Activated CD8-positive, alpha-beta memory T cell treated with anti-CD3 and anti-CD28 coated beads, Interleukin-2, amount 10 ng/mL, durations not matched to agents 7 days and 5 days (primary cell): ENCODE measurements at regions of chr14 and their contacts with region 1.

Region 1: DNA sequence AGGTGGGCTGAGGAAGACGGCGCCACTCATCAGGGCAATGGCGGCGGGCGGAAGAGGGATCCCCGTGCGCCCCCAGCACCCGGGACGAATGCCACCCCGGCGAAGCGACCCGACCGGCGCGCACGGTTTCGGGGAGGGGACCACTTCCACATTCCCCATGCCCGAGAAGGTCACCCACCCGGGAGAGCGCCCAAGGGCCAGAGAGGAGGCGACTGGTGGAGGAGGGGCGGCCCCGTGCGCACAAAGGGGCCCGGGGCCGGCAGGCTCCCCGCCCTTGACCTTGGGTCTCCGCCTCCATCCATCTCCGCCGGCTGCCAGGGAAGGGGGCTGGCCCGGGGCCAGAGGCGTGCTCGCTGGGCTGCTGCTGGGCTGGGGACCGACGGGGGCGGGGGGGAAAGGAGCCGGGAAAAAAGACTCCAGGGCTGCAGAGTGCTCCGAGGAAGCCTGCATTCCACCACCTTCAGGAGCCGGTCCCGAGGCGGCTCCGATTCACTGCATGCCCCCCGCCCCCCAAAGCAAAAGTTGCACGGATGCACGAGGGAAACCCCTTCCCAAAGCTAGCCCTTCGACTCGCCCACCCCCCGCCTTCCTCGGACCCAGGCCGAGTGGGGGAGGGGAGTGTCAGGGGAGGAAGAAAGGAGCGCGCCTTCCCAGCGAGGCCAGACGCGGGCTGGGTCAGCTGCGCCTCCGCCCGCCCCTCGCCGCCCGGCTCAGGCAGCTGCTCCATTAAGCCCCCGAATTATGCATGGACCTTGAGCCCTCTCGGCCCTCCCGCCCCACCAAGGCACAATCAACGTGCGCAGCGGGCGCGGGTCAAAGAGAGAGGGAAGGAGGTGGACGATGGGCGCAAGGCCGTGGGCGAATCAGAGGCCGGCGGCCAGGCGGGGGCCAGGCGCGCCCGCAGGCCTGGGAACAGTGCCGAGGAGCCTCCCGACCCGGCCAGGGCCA is 26.2 kb downstream of the BCL11B start:
- DNase-seq: no peak
- ATAC-seq: no peak
- H3K4me3 Mint-ChIP-seq: peak overlapping the region; percentile 73
- H3K27ac Mint-ChIP-seq: peak overlapping the region; percentile 91
- H3K4me1 Mint-ChIP-seq: peaks cover 82% of the 10 kb centered on the region
- H3K27me3 Mint-ChIP-seq: no peaks in the 10 kb centered on the region

Region 2: DNA sequence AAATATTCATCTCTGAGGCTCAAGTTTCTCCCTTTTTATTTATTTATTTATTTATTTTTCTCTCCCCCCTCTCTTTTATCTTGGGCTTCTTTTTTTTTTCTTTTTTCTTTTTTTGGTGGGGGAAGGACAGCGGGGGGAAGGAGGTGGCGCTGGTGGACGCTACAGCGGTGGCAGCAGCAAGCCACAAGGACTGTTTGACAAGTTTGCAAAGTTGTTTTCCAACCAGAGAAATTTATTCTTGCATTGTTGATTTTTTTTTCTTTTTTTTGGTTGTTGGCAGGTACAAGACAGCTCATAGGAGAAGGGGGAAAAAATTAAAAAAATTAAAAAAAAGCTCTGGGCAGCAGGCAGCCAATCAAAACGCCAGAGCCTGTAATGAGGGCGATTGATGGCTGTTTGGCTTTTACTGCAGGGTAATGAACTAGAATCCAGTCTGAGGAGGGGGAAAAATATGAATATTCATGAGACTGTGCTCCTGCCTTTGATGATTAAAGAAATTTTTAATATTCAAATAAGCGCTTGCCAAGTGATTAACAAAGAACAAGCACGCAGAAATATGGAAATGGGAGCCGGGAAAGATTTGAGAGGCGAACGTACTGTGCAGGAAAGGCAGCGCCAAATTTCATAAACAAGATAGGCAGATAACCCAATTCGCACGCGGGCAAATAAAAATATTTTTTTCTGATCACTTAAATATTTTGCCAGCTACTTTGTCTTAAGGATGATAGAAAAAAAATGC is 10.1 kb before region 1 on chr14:
- CTCF ChIA-PET with region 1: interaction called, 56 read pairs
- DNase-seq: no peak
- ATAC-seq: no peak
- H3K4me3 Mint-ChIP-seq: peak overlapping the region; percentile 73
- H3K27ac Mint-ChIP-seq: peak overlapping the region; percentile 91
- H3K4me1 Mint-ChIP-seq: peaks cover 91% of the 10 kb centered on the region
- H3K27me3 Mint-ChIP-seq: no peaks in the 10 kb centered on the region

Region 3: GRCh38 chr14:99415496-99416281 is 169.9 kb after region 1 on chr14:
- CTCF ChIA-PET with region 1: no interaction called
- DNase-seq: peak; percentile 79
- ATAC-seq: peak; percentile 98
- H3K4me3 Mint-ChIP-seq: no peak overlapping the region
- H3K27ac Mint-ChIP-seq: no peak overlapping the region
- H3K4me1 Mint-ChIP-seq: peaks cover 30% of the 10 kb centered on the region
- H3K27me3 Mint-ChIP-seq: no peaks in the 10 kb centered on the region